Heart left ventricle (tissue), 16 donors: ENCODE measurements at regions of chr20 and their contacts with region 1.

Region 1: DNA sequence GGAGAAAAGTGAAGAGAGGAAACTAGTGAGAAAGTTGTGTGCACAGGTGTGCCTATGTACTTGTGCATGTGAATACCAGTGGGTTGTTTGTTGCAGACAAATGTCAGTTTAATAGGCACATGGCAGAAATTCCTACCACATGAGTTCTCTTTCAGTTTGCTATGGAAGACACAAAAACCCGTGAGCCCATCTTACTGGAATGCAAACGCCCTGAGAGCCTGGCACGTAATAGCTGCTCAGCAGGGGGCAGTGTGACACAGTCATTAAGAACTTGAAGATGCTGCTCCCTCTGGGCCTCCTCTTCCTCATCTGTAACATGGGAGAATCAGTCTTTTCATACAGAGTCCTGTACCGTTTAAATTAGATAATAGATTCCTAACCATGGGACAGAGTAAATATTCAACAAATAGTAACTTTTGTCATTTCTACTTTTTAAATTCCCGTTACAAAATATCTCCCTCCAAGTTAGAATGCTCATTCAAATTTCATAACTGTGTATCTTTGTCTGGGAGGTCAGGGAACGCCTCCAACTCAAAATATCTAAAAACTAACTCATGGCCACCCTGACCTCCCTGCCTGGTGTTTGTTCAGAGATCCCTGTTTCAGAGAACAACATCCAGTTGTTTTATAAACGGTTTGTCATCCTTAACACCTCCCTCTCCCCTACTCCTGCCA is 802.9 kb downstream of the MAFB start:
- DNase-seq: peak; percentile 54 to 82 (median 66)
- ATAC-seq: peak; percentile 71 to 86 (median 78)
- H3K4me3 ChIP-seq: no peak overlapping the region
- H3K27ac ChIP-seq: peak overlapping the region in 2 of 12 donors; percentile 0 to 4
- H3K4me1 ChIP-seq: peaks cover 0 to 9% (median 0%) of the 10 kb centered on the region in 12 donors
- H3K27me3 ChIP-seq: peaks cover 0 to 3% (median 0%) of the 10 kb centered on the region in 9 donors
- CTCF ChIP-seq: peak; percentile 35 to 70 (median 62)
- POLR2A ChIP-seq: no peak

Region 2: GRCh38 chr20:39795401-39796272 is 90.5 kb before region 1 on chr20:
- intact Hi-C with region 1: no loop called
- DNase-seq: no peak
- ATAC-seq: peak in 1 of 4 donors; percentile 59
- H3K4me3 ChIP-seq: no peak overlapping the region
- H3K27ac ChIP-seq: peak overlapping the region in 1 of 12 donors; percentile 9
- H3K4me1 ChIP-seq: peaks cover 0 to 10% (median 0%) of the 10 kb centered on the region in 12 donors
- H3K27me3 ChIP-seq: no peaks in the 10 kb centered on the region
- CTCF ChIP-seq: no peak
- POLR2A ChIP-seq: no peak

Region 3: DNA sequence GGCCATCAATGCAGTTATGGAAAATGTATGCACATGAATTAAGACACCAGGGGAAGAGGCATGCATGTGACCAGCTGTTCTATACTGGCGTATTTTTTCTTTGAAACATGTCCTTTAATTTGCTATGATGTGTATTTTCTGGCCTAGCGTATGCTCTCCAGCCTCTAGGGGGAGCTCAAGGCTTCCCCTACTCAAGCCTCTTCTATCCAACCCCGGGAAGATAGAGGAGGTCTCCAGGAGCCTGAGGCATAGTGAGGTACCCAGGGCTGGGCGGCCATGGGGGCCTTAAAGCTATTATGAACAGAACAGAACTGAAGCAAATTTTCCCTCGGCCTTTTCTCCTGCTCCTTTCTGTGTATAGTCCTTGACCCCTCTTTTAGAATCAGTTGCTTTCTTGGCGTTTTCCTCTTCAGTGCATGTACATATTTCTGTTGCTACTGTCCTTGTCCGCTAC is 274.0 kb after region 1 on chr20:
- intact Hi-C with region 1: loop called in 1 of 10 experiments (anchors 5 kb)
- DNase-seq: peak in 4 of 5 donors; percentile 17 to 41 (median 30)
- ATAC-seq: peak; percentile 51 to 76 (median 66)
- H3K4me3 ChIP-seq: no peak overlapping the region
- H3K27ac ChIP-seq: no peak overlapping the region
- H3K4me1 ChIP-seq: no peaks in the 10 kb centered on the region
- H3K27me3 ChIP-seq: peaks cover 0 to 3% (median 0%) of the 10 kb centered on the region in 9 donors
- CTCF ChIP-seq: peak; percentile 52 to 75 (median 68)
- POLR2A ChIP-seq: no peak

Region 4: GRCh38 chr20:40265825-40266533 is 379.9 kb after region 1 on chr20:
- intact Hi-C with region 1: loop called in 1 of 10 experiments (anchors 10 kb)
- DNase-seq: peak in 1 of 5 donors; percentile 33
- ATAC-seq: peak in 2 of 4 donors; percentile 55 to 66
- H3K4me3 ChIP-seq: no peak overlapping the region
- H3K27ac ChIP-seq: peak overlapping the region in 1 of 12 donors; percentile 9
- H3K4me1 ChIP-seq: peaks cover 0 to 25% (median 0%) of the 10 kb centered on the region in 12 donors
- H3K27me3 ChIP-seq: peaks cover 0 to 3% (median 0%) of the 10 kb centered on the region in 9 donors
- CTCF ChIP-seq: peak in 11 of 12 donors; percentile 20 to 63 (median 41)
- POLR2A ChIP-seq: no peak

Region 5: GRCh38 chr20:40339661-40340449 is 453.7 kb after region 1 on chr20:
- intact Hi-C with region 1: no loop called
- DNase-seq: peak; percentile 33 to 68 (median 56)
- ATAC-seq: peak; percentile 65 to 93 (median 84)
- H3K4me3 ChIP-seq: no peak overlapping the region
- H3K27ac ChIP-seq: peak overlapping the region in 4 of 12 donors; percentile 13 to 85 (median 22)
- H3K4me1 ChIP-seq: peaks cover 0 to 13% (median 0%) of the 10 kb centered on the region in 12 donors
- H3K27me3 ChIP-seq: peaks cover 0 to 1% (median 0%) of the 10 kb centered on the region in 9 donors
- CTCF ChIP-seq: no peak
- POLR2A ChIP-seq: no peak

Region 6: DNA sequence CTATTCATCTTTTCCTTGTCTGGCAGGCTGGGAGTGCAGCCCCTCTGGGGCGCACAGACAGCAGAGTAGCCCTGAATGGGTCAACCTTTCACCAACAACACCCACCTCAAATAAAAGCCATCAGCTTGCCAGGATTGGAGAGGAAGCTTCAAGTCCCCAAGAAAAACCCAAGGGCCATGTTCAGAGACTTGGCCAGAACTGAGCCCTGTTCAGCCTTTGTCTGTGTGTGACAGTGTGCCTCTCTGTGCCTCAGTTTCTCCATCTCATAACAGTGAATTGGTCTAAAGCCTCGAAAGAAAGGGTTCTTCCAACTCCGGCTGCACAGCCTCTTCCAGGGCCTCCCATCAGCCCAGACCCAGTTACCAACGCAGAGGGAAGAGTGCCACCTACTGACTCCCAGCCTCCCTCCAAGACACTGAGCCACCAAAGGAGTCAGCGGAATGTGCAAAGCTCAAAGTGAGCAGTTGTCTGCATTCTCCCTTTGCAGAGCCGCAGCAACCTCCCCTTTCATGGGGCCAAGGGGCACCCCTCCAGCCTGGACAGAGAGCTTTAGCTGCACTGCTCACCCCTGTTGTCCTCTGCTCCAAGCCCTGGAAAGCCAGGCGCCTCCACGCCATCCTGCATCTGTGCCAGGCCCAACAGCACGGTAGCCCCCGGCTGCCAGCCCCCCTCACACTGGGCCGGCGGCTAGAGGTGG is 1059.8 kb after region 1 on chr20:
- intact Hi-C with region 1: loop called in 2 of 10 experiments (anchors 5 to 10 kb)
- DNase-seq: peak in 3 of 5 donors; percentile 58 to 66 (median 60)
- ATAC-seq: peak; percentile 73 to 93 (median 86)
- H3K4me3 ChIP-seq: no peak overlapping the region
- H3K27ac ChIP-seq: no peak overlapping the region
- H3K4me1 ChIP-seq: no peaks in the 10 kb centered on the region
- H3K27me3 ChIP-seq: peaks cover 0 to 21% (median 0%) of the 10 kb centered on the region in 9 donors
- CTCF ChIP-seq: peak in 11 of 12 donors; percentile 38 to 71 (median 60)
- POLR2A ChIP-seq: no peak